ENCODE measurements at regions of chr6 and their contacts with region 1.

Region 1: DNA sequence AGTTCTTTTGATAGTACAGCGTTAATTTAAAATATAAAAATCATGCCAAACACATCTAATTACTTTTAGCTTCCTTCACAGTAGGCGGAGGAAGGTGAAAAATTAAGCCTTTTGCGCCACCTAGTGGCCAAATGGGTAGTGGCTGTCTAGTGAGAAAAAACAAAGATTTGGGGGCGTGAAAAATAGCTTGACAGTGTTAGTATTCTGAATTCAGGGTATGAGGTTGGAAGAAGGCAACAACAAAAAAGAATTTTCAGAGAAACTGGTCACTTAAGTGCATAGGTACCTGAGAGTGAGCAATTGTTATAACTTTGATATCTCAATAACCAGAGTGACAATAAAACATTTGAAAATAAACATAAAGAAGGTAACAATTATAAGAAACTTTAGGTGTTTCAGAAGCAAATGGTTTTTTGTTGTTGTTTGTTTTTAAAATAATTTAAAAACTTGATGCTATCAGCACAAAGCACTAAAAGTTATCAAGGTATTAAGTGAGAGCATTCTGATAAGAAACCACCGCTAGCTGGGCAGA is 14.3 kb downstream of the PSMB9 start:
- DNase-seq: peak; percentile 52
- CTCF ChIP-seq: peak; percentile 88

Region 2: GRCh38 chr6:32488083-32488482 is 380.2 kb before region 1 on chr6:
- CTCF ChIA-PET with region 1: no interaction called
- POLR2A ChIA-PET with region 1: no interaction called
- DNase-seq: no peak
- CTCF ChIP-seq: no peak

Region 3: GRCh38 chr6:32785781-32786533 is 82.4 kb before region 1 on chr6:
- CTCF ChIA-PET with region 1: interaction called, 23 read pairs
- POLR2A ChIA-PET with region 1: no interaction called
- DNase-seq: peak; percentile 53
- CTCF ChIP-seq: peak; percentile 66

Region 4: GRCh38 chr6:32825966-32826365 is 42.4 kb before region 1 on chr6:
- CTCF ChIA-PET with region 1: interaction called, 64 read pairs
- POLR2A ChIA-PET with region 1: no interaction called
- DNase-seq: no peak
- CTCF ChIP-seq: peak; percentile 36

Region 5: DNA sequence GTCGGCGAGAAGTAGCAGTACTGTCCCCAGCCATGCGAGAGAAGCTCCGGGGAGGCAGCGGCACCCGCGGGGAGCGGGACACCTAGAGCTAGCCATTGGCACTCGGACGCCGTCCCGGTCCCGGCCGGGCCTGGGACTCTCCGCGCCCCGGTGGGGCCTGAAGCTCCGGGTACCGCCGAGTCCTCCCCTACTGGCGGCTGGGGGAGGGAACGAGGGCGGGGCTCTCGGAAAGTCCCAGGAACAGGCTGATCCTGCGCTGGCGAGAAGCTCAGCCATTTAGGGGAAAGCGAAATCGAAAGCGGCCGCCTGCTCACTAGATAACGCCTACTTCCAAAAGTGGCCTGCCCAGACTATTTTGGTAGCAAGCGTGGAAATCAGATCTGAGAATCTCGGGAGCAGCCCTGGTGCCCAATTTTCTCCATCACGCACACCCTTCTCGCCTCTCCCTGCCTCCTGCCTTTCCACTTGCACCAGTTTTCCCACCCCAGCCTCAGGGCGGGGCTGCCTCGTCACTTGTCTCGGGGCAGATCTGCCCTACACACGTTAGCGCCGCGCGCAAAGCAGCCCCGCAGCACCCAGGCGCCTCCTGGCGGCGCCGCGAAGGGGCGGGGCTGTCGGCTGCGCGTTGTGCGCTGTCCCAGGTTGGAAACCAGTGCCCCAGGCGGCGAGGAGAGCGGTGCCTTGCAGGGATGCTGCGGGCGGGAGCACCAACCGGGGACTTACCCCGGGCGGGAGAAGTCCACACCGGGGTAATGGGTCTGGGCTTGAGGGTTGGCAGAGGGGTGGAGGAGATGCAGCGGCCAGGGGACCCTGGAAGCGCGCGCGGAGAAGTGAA is 14.6 kb before region 1 on chr6 and contains the starts of genes PSMB9 and TAP1:
- CTCF ChIA-PET with region 1: interaction called, 159 read pairs
- POLR2A ChIA-PET with region 1: interaction called, 4 read pairs
- DNase-seq: peak; percentile 93
- CTCF ChIP-seq: peak; percentile 97

Region 6: DNA sequence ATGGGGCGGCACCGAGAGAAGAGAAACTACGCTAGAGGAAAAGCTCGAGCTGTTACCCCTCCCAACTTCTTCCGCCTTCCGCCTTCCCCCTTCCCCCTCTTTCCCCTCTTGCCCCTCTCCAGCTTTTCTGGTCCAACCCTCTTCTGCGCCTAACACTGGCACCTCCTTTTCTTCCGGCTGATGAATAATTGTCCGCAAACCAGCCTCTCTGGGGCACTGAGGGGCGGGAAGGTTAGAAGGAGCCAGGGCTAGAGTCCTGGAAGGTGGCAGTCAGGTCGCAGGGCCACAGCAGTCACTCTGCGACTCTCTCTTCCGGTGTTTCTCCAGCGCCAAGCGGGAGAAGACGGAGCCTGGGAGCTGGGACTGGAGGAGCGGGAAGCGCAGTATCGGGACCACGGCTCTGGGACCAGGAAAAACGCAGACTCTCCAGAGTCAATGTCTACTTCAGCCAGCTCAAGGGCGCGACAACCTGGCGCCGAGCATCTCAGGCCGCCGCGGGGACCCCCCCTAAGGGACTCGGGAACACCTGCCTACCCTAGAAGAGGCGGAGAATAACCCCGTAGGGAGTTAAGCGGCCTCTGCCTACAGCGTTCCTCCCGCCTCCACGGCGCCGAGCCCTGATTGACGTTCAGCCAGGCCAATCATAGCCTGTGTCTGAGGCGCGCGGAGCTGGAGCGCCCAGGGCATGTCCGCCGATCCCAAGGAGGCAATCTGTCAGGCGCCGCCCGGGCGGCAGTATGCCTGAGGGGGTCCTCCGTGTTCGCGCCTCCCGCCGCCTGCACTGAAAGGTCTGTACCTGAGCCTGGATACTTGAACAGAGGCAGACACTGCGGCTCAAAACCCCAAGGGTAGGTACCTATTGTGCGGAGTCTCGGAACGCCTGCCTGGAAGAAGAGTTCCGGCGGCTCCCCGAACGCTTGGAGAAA is 26.0 kb after region 1 on chr6:
- CTCF ChIA-PET with region 1: interaction called, 11 read pairs
- POLR2A ChIA-PET with region 1: no interaction called
- DNase-seq: peak; percentile 100
- CTCF ChIP-seq: no peak

Region 7: GRCh38 chr6:32947552-32948465 is 79.5 kb after region 1 on chr6:
- CTCF ChIA-PET with region 1: interaction called, 25 read pairs
- POLR2A ChIA-PET with region 1: no interaction called
- DNase-seq: no peak
- CTCF ChIP-seq: peak; percentile 82